ENCODE measurements at regions of chr5 and their contacts with region 1.

Region 1: GRCh38 chr5:134041570-134042411 is 37.0 kb upstream of the VDAC1 start:
- DNase-seq: no peak
- ATAC-seq: no peak
- H3K4me3 ChIP-seq: no peak overlapping the region
- H3K27ac ChIP-seq: no peak overlapping the region; the same call in 1 of the 2 replicates
- H3K4me1 ChIP-seq: peaks cover 17% of the 10 kb centered on the region
- H3K27me3 ChIP-seq: no peaks in the 10 kb centered on the region
- CTCF ChIP-seq: no peak

Region 2: GRCh38 chr5:134026521-134027268 is 15.1 kb before region 1 on chr5:
- CTCF ChIA-PET with region 1: interaction called, 14 read pairs
- POLR2A ChIA-PET with region 1: no interaction called
- in situ Hi-C with region 1: no loop called
- intact Hi-C with region 1: no loop called
- DNase-seq: peak; percentile 53
- ATAC-seq: peak; percentile 93
- H3K4me3 ChIP-seq: no peak overlapping the region
- H3K27ac ChIP-seq: peak overlapping the region; percentile 64
- H3K4me1 ChIP-seq: no peaks in the 10 kb centered on the region
- H3K27me3 ChIP-seq: no peaks in the 10 kb centered on the region
- CTCF ChIP-seq: peak; percentile 83

Region 3: DNA sequence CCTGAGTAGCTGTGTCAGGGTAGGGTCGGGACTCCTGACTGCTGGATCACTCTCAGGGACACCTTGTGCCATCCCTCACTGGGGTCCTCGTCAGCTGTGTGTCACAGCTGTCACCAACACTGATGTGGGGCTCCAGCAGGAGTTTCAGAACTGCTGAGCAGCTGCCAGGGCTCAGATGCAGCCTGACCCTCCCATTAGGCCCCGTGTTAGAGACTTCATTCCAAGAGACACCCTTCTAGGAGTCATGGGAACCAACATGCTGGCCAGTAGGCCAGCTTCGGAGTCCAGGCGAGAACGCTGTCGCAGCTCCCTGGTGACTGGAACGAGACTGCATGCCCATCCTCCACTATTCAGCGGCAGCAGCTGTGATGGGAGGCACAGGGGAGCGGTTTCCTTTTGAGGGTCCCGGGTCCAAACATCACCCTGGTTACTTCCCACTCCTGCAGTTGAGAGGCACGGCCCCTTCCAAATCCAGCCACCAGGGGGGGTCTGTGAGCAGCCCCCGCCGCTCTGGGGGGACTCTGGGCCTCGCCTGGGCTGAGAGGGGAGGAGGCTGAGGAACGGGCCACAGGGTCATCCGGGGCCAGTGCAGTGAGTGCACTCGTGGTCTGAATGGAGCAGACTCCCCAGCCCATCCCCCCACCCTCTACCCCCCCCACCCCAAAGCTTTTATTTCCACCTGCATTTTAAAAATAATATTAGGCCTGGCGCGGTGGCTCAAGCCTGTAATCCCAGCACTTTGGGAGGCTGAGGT is 60.1 kb after region 1 on chr5:
- CTCF ChIA-PET with region 1: interaction called, 10 read pairs
- POLR2A ChIA-PET with region 1: interaction called, 3 read pairs
- in situ Hi-C with region 1: no loop called
- intact Hi-C with region 1: no loop called
- DNase-seq: no peak
- ATAC-seq: peak; percentile 81
- H3K4me3 ChIP-seq: no peak overlapping the region
- H3K27ac ChIP-seq: peak overlapping the region; percentile 44; the same call in 1 of the 2 replicates
- H3K4me1 ChIP-seq: peaks cover 20% of the 10 kb centered on the region
- H3K27me3 ChIP-seq: no peaks in the 10 kb centered on the region
- CTCF ChIP-seq: peak; percentile 98

Region 4: DNA sequence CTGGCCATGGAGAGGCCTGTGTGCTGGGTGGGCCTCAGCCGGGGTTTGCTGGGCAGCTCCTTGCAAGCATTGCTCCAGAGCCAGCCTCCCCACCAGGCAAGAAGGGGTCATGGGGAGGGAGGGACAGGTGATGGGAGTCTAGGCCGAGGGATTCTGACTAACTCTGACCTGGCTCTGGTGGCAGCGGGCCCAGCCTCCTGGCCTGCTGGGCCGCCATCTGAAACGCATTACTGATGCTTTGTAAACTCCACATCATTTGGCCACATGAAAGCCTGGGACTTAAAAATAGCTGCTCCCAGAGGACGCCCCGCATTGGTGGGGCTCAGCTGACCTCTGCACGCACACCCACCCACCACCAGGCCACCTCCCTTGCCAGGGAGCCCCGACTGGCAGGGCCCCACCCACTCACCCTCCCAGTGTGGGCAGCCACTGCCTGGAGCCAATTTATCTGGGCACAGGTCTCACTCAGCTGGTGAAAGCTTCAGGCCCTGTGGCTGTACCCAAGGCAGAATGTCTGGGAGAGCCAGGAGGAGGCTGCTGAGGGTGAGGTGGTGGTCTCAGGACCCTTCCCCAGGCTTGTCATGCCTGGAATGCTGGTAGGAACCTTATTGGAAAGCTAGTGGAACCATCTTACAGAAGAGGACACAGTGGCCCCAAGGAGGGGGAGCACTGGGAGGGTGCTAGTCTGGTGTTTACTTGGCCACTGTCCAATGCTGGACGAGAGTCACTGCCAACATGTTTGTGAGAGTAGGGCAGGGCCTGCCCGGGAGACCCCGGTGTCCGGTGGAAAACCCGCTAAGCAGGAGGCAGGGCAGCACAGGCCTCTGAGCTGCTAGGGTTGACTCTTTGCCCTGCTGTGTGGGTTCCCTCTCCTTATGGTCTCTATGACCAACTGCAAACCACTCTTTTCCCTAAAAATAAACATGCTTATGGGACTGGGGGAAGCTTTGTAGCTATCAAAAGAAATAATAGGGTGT is 83.5 kb after region 1 on chr5:
- CTCF ChIA-PET with region 1: interaction called, 17 read pairs
- POLR2A ChIA-PET with region 1: no interaction called
- in situ Hi-C with region 1: no loop called
- intact Hi-C with region 1: no loop called
- DNase-seq: peak; percentile 82
- ATAC-seq: peak; percentile 82
- H3K4me3 ChIP-seq: no peak overlapping the region
- H3K27ac ChIP-seq: peak overlapping the region; percentile 73
- H3K4me1 ChIP-seq: peaks cover 38% of the 10 kb centered on the region
- H3K27me3 ChIP-seq: no peaks in the 10 kb centered on the region
- CTCF ChIP-seq: no peak

Region 5: GRCh38 chr5:134140530-134141201 is 98.9 kb after region 1 on chr5:
- CTCF ChIA-PET with region 1: interaction called, 29 read pairs
- POLR2A ChIA-PET with region 1: no interaction called
- in situ Hi-C with region 1: no loop called
- intact Hi-C with region 1: loop called (anchors 1 kb)
- DNase-seq: no peak
- ATAC-seq: peak; percentile 77
- H3K4me3 ChIP-seq: no peak overlapping the region
- H3K27ac ChIP-seq: peak overlapping the region; percentile 37
- H3K4me1 ChIP-seq: peaks cover 40% of the 10 kb centered on the region
- H3K27me3 ChIP-seq: no peaks in the 10 kb centered on the region
- CTCF ChIP-seq: peak; percentile 86

Region 6: GRCh38 chr5:134145779-134146581 is 104.2 kb after region 1 on chr5:
- CTCF ChIA-PET with region 1: interaction called, 29 read pairs
- POLR2A ChIA-PET with region 1: interaction called, 3 read pairs
- in situ Hi-C with region 1: no loop called
- intact Hi-C with region 1: no loop called
- DNase-seq: peak; percentile 69
- ATAC-seq: peak; percentile 88
- H3K4me3 ChIP-seq: no peak overlapping the region
- H3K27ac ChIP-seq: no peak overlapping the region
- H3K4me1 ChIP-seq: peaks cover 6% of the 10 kb centered on the region
- H3K27me3 ChIP-seq: no peaks in the 10 kb centered on the region
- CTCF ChIP-seq: peak; percentile 90